ENCODE measurements at regions of chr22 and their contacts with region 1.

Region 1: GRCh38 chr22:42614312-42615091 is at the start of gene POLDIP3:
- DNase-seq: peak; percentile 98
- H3K4me3 ChIP-seq: peak within 1 kb of the TSS; percentile 62 to 98 (median 94)
- H3K27ac ChIP-seq: peak within 1 kb of the TSS; percentile 98
- H3K4me1 ChIP-seq: peaks cover 5 to 10% (median 9%) of the 10 kb centered on the region in 4 experiments
- H3K27me3 ChIP-seq: no peaks in the 10 kb centered on the region
- CTCF ChIP-seq: peak in 1 of 3 experiments; percentile 32; a peak in 1 of 4 replicates
- EP300 ChIP-seq: no peak
- POLR2A ChIP-seq: no peak; a peak in 1 of 3 replicates
- RAD21 ChIP-seq: no peak
- total RNA-seq, gene POLDIP3: 77.3 and 84.6 TPM in 2 replicates

Region 2: DNA sequence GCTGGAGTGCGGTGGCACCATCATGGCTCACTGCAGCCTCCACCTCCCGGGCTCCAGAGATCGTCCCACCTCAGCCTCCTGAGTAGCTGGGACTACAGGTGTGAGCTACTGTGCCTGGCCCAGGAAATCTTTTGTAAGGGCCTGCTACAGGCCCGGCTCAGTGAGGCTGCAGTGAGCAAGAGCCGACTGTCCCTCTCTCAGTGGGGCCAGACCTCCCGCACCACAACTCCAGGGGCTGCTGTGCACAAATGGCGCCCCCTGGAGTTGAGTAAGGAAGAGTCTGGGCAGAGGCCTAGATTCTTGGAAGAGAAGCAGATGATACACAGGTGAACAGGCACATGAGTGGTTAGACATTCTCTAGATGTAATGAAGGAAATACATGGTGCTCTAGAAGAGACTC is 53.7 kb before region 1 on chr22:
- CTCF ChIA-PET with region 1: interaction called, 4 read pairs
- POLR2A ChIA-PET with region 1: interaction called, 17 read pairs
- DNase-seq: no peak
- H3K4me3 ChIP-seq: no peak overlapping the region
- H3K27ac ChIP-seq: no peak overlapping the region
- H3K4me1 ChIP-seq: peaks cover 0 to 3% (median 1%) of the 10 kb centered on the region in 4 experiments; a peak in 1 of 7 replicates
- H3K27me3 ChIP-seq: peaks cover 0 to 8% (median 3%) of the 10 kb centered on the region in 4 experiments; a peak in 5 of 7 replicates
- CTCF ChIP-seq: peak; percentile 68 to 83 (median 69)
- EP300 ChIP-seq: no peak
- POLR2A ChIP-seq: no peak
- RAD21 ChIP-seq: peak; percentile 59 to 72

Region 3: DNA sequence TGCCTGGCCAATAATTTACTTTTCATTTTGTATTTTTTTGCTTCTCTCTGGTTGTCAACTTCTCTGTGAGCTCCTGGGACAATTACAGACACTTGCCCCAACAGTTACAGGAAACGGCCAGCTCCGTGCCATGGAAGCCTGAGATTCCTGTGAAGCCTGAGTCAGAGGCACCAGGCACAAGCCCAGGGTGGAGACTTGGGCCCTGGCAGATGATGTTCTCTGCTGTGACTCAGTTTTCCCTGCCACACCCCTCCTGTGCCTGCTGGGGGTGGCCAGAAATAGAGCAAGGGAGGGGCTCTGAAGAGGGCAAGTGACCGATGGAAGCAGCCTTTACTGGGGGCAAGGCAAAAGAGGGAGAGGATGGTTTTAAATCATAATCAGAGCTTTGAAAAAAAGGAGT is 21.0 kb after region 1 on chr22:
- CTCF ChIA-PET with region 1: interaction called, 4 read pairs
- POLR2A ChIA-PET with region 1: interaction called, 24 read pairs
- DNase-seq: no peak
- H3K4me3 ChIP-seq: no peak overlapping the region
- H3K27ac ChIP-seq: no peak overlapping the region
- H3K4me1 ChIP-seq: peaks cover 0 to 3% (median 1%) of the 10 kb centered on the region in 4 experiments; a peak in 2 of 7 replicates
- H3K27me3 ChIP-seq: no peaks in the 10 kb centered on the region
- CTCF ChIP-seq: no peak
- EP300 ChIP-seq: no peak
- POLR2A ChIP-seq: no peak
- RAD21 ChIP-seq: no peak

Region 4: GRCh38 chr22:42699281-42699975 is 84.9 kb after region 1 on chr22:
- CTCF ChIA-PET with region 1: no interaction called
- POLR2A ChIA-PET with region 1: interaction called, 15 read pairs
- DNase-seq: no peak
- H3K4me3 ChIP-seq: no peak overlapping the region
- H3K27ac ChIP-seq: no peak overlapping the region
- H3K4me1 ChIP-seq: peaks cover 9 to 16% (median 13%) of the 10 kb centered on the region in 4 experiments; a peak in 6 of 7 replicates
- H3K27me3 ChIP-seq: no peaks in the 10 kb centered on the region
- CTCF ChIP-seq: no peak
- EP300 ChIP-seq: no peak
- POLR2A ChIP-seq: no peak
- RAD21 ChIP-seq: no peak

Region 5: GRCh38 chr22:42868751-42869251 is 254.3 kb after region 1 on chr22:
- CTCF ChIA-PET with region 1: no interaction called
- POLR2A ChIA-PET with region 1: interaction called, 13 read pairs
- DNase-seq: no peak
- H3K4me3 ChIP-seq: no peak overlapping the region
- H3K27ac ChIP-seq: no peak overlapping the region
- H3K4me1 ChIP-seq: no peaks in the 10 kb centered on the region
- H3K27me3 ChIP-seq: no peaks in the 10 kb centered on the region
- CTCF ChIP-seq: no peak
- EP300 ChIP-seq: no peak
- POLR2A ChIP-seq: no peak
- RAD21 ChIP-seq: no peak

Measured in H1 (cell line).